Gastrocnemius medialis (tissue), 4 donors: ENCODE measurements at regions of chr7 and their contacts with region 1.

Region 1: DNA sequence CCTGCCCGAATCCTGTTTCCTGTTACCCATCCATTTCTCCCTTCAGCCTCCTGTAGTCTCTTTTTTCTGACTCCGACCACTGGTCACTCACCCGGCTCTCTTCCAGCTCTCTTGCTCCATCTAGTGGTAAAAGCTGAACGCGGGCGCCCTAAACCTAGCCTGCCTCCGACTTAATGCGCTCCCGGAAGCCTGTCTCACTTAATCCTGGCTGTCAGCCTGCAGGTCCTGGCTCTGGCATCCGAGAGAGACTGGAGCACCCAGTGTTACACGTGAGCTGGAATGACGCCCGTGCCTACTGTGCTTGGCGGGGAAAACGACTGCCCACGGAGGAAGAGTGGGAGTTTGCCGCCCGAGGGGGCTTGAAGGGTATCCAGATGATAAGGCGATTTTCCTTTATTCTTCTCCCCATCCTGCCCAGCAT is 10.3 kb downstream of the SUMF2 start:
- DNase-seq: peak; percentile 70 to 89
- ATAC-seq: peak; percentile 81 to 84
- H3K4me3 ChIP-seq: no peak overlapping the region
- H3K27ac ChIP-seq: peak overlapping the region; percentile 20 to 56 (median 44)
- H3K4me1 ChIP-seq: peaks cover 11 to 23% of the 10 kb centered on the region in 2 donors
- H3K27me3 ChIP-seq: no peaks in the 10 kb centered on the region
- CTCF ChIP-seq: peak; percentile 79 to 95 (median 93)
- POLR2A ChIP-seq: no peak

Region 2: DNA sequence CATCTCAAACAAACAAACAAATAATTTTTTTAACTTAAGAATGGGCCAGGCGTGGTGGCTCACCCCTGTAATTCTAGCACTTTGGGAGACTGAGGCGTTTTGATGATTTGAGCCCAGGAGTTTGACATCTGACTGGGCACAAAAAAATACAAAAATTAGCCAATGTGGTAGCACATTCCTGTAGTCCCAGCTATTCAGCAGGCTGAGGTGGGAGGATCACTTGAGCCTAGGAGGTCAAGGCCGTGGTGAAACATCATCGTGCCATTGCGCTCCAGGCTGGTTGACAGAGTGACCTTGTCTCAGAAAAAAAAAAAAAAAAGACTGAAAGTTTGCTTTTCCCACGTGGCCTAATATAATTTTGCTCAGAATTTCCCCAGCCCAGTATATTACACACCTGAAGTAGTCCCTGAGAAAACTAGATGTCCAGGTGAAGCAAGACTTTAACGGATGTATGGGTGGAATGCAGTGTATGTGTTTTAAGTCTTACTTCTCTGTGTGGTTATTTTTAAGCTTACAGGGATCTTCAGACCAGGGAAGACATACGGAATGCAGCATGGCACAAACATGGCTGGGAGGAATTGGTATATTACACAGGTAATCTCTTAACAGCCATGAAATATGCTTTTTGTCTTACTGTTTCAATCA is 77.4 kb before region 1 on chr7:
- in situ Hi-C with region 1: loop called in 2 of 4 experiments (anchors 5 to 10 kb)
- intact Hi-C with region 1: no loop called
- DNase-seq: no peak
- ATAC-seq: no peak
- H3K4me3 ChIP-seq: no peak overlapping the region
- H3K27ac ChIP-seq: no peak overlapping the region
- H3K4me1 ChIP-seq: no peaks in the 10 kb centered on the region
- H3K27me3 ChIP-seq: no peaks in the 10 kb centered on the region
- CTCF ChIP-seq: no peak
- POLR2A ChIP-seq: no peak

Region 3: GRCh38 chr7:56003749-56004148 is 70.6 kb before region 1 on chr7:
- in situ Hi-C with region 1: loop called in 3 of 4 experiments (anchors 5 to 10 kb)
- intact Hi-C with region 1: loop called (anchors 1 kb)
- DNase-seq: no peak
- ATAC-seq: no peak
- H3K4me3 ChIP-seq: no peak overlapping the region
- H3K27ac ChIP-seq: no peak overlapping the region
- H3K4me1 ChIP-seq: no peaks in the 10 kb centered on the region
- H3K27me3 ChIP-seq: no peaks in the 10 kb centered on the region
- CTCF ChIP-seq: no peak
- POLR2A ChIP-seq: no peak

Region 4: DNA sequence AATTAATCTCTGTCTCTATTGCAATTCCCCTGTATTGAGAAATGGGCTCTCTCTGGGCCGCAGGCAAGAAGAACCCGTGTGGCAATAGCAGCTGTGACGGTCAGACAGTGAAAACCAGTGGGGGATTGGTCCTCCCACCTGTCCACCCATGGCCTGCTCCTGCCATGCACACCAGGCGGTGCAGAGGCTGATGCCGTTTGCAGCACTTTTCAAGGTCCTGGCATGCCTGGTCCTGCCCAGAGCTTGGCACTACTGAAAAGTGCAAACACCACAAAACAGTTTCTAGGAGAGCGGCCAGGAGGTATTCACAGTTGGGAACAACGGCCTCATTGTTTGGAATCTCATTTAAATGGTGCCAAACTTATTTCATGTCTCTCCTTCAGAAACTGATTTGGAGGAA is 64.7 kb before region 1 on chr7:
- in situ Hi-C with region 1: loop called in 2 of 4 experiments (anchors 5 to 10 kb)
- intact Hi-C with region 1: loop called (anchors 1 kb)
- DNase-seq: peak in 1 of 2 donors; percentile 50
- ATAC-seq: peak in 1 of 2 donors; percentile 63
- H3K4me3 ChIP-seq: no peak overlapping the region
- H3K27ac ChIP-seq: no peak overlapping the region
- H3K4me1 ChIP-seq: no peaks in the 10 kb centered on the region
- H3K27me3 ChIP-seq: no peaks in the 10 kb centered on the region
- CTCF ChIP-seq: no peak
- POLR2A ChIP-seq: no peak